MCF 10A (cell line): ENCODE measurements at regions of chr9 and their contacts with region 1.

Region 1: DNA sequence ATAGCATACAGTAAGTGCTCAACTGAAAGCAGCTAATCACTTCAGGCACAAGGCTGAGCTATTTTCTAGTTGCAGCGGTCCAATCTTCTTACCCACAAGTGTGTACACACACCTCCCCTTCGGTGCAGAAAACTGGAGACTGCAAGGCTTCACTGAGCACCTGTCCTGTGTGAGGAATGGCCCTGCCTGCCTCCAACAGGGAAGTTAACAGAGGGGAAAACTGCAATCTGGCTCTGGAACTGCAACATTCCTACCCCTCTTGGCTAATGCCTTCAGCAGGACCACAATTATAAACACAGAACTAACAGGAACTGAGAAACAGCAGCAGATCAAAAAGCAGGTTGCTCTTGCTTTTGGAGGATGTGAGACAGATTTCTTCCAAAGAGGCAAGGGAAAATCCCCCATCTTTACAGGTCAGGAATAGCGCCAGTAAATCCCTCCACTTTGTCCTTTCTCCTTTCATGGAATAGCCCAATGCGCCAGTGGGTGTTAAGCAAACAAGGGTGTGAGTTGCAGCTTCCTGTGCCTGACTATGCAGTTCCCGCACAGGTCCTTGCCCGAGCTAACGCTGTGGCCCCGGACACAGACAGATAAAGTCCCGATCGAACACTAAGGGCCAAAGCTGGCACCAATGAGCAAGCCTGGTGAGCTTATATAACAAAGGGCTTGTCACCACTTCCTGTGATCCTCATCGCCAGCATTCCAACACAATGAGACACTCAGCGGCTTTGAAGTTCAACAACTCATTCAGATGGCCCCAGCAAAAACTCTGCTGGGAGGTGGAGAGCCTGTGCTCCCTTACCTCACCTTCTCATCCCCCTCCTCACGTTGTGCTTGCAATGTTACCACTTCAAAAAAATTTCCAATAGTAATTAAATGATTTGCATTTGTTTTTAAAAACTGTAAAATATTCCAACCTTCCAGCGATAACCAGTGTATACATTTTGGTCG is 21.5 kb downstream of the SHB start:
- DNase-seq: peak; percentile 90
- H3K4me3 Mint-ChIP-seq: peak overlapping the region; percentile 36
- H3K27ac Mint-ChIP-seq: peak overlapping the region; percentile 81
- H3K4me1 Mint-ChIP-seq: peaks cover 42% of the 10 kb centered on the region
- H3K27me3 Mint-ChIP-seq: no peaks in the 10 kb centered on the region
- CTCF ChIP-seq: no peak

Region 2: GRCh38 chr9:37706290-37706689 is 341.3 kb before region 1 on chr9:
- CTCF ChIA-PET with region 1: no interaction called
- POLR2A ChIA-PET with region 1: no interaction called
- intact Hi-C with region 1: no loop called
- DNase-seq: no peak
- H3K4me3 Mint-ChIP-seq: no peak overlapping the region
- H3K27ac Mint-ChIP-seq: no peak overlapping the region
- H3K4me1 Mint-ChIP-seq: no peaks in the 10 kb centered on the region
- H3K27me3 Mint-ChIP-seq: peaks cover 45% of the 10 kb centered on the region
- CTCF ChIP-seq: no peak

Region 3: GRCh38 chr9:37953775-37954437 is 93.7 kb before region 1 on chr9:
- CTCF ChIA-PET with region 1: no interaction called
- POLR2A ChIA-PET with region 1: no interaction called
- intact Hi-C with region 1: no loop called
- DNase-seq: peak; percentile 95
- H3K4me3 Mint-ChIP-seq: peak overlapping the region; percentile 52
- H3K27ac Mint-ChIP-seq: peak overlapping the region; percentile 84
- H3K4me1 Mint-ChIP-seq: peaks cover 35% of the 10 kb centered on the region
- H3K27me3 Mint-ChIP-seq: no peaks in the 10 kb centered on the region
- CTCF ChIP-seq: no peak

Region 4: GRCh38 chr9:37963936-37964739 is 83.4 kb before region 1 on chr9:
- CTCF ChIA-PET with region 1: interaction called, 3 read pairs
- POLR2A ChIA-PET with region 1: interaction called, 3 read pairs
- intact Hi-C with region 1: loop called (anchors 5 kb)
- DNase-seq: peak; percentile 89
- H3K4me3 Mint-ChIP-seq: no peak overlapping the region
- H3K27ac Mint-ChIP-seq: peak overlapping the region; percentile 92
- H3K4me1 Mint-ChIP-seq: peaks cover 50% of the 10 kb centered on the region
- H3K27me3 Mint-ChIP-seq: no peaks in the 10 kb centered on the region
- CTCF ChIP-seq: no peak

Region 5: DNA sequence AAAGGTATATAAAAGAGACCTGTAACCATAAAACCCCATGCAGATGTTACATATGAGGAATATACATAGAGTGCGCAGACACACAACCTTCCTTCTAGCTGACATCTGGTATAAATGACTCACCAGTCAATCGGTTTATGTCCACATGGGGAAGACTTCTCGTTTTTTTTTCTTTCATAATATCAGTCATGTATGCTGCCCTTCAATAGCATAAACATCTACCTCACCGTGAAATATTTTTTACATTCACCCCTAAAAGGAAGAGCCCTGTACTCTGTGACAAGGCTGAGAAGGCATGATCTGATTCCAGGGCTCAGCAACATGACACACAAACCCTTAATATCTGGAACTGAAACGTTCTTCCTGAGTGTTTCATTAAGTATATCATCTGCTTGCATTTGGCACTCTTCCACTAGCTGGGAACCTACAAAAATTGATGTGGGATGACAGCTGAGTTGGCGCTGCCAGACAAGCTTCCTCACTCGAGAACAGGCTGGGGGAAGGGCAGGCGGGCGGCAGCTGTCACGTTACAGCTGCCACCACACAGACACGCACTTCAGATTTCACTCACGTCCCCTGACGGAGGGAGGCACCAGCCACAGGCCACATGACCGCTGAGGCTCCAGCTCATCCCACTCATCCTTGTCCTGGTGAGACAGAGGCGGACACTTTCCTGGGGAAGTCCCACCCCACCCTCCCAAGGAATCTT is 52.8 kb before region 1 on chr9:
- CTCF ChIA-PET with region 1: no interaction called
- POLR2A ChIA-PET with region 1: no interaction called
- intact Hi-C with region 1: loop called (anchors 1 kb)
- DNase-seq: peak; percentile 72
- H3K4me3 Mint-ChIP-seq: peak overlapping the region; percentile 59
- H3K27ac Mint-ChIP-seq: peak overlapping the region; percentile 55
- H3K4me1 Mint-ChIP-seq: peaks cover 37% of the 10 kb centered on the region
- H3K27me3 Mint-ChIP-seq: no peaks in the 10 kb centered on the region
- CTCF ChIP-seq: no peak

Region 6: DNA sequence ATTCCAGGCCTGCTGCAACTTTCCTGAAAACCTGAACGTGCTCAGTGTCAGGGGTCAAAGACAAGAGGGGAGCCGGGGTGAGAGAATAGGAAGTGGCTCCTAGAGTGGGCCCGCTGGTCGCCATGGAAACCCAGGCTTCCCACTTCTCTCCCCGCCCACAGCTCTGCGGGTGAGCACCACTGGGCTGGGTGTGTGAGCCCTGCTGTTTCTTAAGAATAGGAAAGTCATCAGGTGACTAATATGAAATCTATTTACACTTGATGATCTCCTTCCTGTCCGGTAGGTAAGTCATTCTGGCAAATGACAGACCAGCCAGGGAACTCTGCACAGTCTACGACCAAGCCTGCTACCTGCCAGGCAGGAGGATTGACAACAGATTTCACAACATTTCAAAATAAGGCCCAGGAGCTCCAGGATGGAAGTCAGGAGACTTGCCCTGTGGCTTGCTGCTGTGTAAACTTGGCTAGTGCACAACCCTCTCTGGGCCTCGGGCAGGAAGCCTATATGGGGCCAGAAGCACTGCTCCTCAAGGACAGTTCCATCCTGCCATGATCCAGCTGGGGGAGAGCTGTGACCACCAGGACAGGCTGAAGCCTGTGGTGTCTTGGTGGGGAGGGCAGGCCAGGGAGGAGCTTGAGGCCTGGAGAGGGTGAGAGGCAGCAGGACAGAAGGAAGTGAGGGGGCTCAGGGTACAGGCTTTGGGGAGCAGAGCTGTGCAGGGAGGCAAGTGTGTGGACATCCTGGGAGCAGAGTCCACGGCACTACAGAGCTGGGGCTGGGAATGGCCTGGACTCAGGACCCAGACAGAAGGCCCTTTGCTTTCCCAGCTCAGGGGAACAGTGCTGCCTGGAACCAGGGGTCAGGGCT is 39.2 kb before region 1 on chr9:
- CTCF ChIA-PET with region 1: no interaction called
- POLR2A ChIA-PET with region 1: interaction called, 10 read pairs
- intact Hi-C with region 1: no loop called
- DNase-seq: peak; percentile 93
- H3K4me3 Mint-ChIP-seq: no peak overlapping the region
- H3K27ac Mint-ChIP-seq: peak overlapping the region; percentile 99
- H3K4me1 Mint-ChIP-seq: peaks cover 44% of the 10 kb centered on the region
- H3K27me3 Mint-ChIP-seq: no peaks in the 10 kb centered on the region
- CTCF ChIP-seq: no peak

Region 7: DNA sequence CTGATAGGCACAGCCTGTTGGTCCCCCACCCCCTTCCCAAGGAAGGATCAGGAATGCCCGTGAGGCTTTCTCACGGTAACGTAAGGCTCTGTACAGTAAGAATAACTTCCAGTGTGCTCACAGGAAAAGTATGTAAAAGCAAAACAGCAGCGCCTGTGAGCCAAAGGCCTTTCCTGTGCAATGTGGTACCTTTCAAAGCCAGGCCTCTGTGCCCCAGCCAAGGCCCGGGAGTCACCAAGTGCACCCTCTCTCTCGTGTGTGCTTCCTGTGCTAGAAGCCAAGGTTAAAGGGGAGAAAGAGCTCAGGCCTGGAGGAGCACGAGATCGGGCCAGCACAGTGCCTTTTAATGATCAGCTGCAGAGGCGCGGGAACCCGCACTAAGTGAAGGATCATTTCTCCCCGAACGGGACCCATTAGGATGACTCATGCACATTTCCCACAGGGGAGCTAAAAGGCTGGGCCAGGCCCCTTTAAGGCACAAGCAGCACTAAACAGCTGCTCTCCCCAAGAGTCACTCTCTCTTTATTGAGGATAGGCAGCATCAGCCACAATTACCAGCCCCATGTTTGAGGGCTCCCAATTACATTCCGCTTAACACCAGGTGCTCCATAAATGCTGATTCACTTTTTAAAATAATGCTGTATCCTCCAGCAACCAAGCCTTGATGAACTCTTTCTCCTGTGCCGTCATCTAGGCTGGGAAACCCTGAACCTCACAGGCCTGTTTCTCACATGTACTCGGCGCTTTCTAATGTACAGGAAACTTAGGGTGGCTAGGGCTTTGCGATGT is 21.4 kb before region 1 on chr9:
- CTCF ChIA-PET with region 1: interaction called, 4 read pairs
- POLR2A ChIA-PET with region 1: interaction called, 39 read pairs
- intact Hi-C with region 1: no loop called
- DNase-seq: peak; percentile 88
- H3K4me3 Mint-ChIP-seq: peak overlapping the region; percentile 38
- H3K27ac Mint-ChIP-seq: peak overlapping the region; percentile 83
- H3K4me1 Mint-ChIP-seq: peaks cover 44% of the 10 kb centered on the region
- H3K27me3 Mint-ChIP-seq: no peaks in the 10 kb centered on the region
- CTCF ChIP-seq: no peak

Region 8: GRCh38 chr9:38035873-38036272 is 11.7 kb before region 1 on chr9:
- CTCF ChIA-PET with region 1: interaction called, 6 read pairs
- POLR2A ChIA-PET with region 1: interaction called, 27 read pairs
- intact Hi-C with region 1: no loop called
- DNase-seq: peak; percentile 72
- H3K4me3 Mint-ChIP-seq: no peak overlapping the region
- H3K27ac Mint-ChIP-seq: peak overlapping the region; percentile 86
- H3K4me1 Mint-ChIP-seq: peaks cover 29% of the 10 kb centered on the region
- H3K27me3 Mint-ChIP-seq: no peaks in the 10 kb centered on the region
- CTCF ChIP-seq: no peak